Dorsolateral prefrontal cortex (tissue), 120 donors: ENCODE measurements at regions of chr5 and their contacts with region 1.

Region 1: GRCh38 chr5:179060116-179061008 is at the start of gene ZNF354C:
- DNase-seq: peak; percentile 78 to 94 (median 85)
- H3K4me3 ChIP-seq: peak within 1 kb of the TSS; percentile 47 to 97 (median 79)
- H3K27ac ChIP-seq: peak within 1 kb of the TSS in 58 of 59 donors; percentile 7 to 87 (median 74)
- H3K27me3 ChIP-seq: peaks cover 0 to 7% (median 0%) of the 10 kb centered on the region in 45 donors
- CTCF ChIP-seq: peak in 36 of 56 donors; percentile 7 to 60 (median 28)
- total RNA-seq, gene ZNF354C: 4.6 to 10.9 (median 7.7) TPM

Region 2: DNA sequence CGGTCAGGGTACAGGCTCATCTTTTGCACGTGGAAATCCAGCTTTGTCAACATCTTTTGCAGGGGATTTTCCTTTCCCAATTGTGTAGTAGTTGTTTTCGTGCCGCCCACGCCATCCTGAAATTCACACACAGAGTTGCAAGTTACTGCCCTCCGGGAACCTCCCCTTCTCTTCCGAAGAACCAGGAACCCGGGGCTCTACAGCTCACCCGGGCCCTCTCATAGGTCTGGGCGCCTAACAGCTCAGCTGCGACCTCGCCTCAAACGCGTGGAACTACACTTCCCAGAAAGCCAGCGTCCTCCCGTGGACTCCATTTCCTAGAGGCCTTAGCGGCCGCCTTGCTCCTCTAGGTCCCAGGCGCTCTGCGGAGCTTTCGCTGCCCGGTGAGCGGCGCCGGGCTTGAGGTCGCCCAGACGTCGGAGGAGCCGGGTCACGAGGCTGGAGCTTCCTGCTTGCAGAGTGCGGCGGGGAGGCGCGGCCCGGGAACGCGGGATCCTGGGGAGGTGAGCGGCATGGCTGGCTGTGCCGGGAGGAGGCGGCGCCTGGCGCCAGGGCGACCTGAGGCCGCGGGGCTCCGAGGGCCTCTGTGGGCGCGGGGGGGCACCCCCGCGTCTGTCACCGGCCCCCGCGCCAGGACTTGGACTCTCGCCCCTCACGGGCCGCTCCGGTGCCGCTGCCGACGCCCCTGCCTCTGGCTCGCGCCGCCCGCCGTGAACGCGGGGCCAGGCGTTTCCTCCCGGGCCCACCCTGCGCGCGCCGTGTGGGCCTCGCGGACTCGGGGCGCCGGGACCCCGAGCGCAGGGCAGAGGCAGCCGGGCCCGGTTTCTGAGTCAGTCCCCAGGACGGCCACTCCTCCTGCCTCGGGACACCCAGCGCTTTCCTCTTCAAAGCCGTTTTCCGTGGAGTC is 200.5 kb before region 1 on chr5 and contains the start of gene ZNF354B:
- intact Hi-C with region 1: loop called in 1 of 2 experiments (anchors 1 kb)
- DNase-seq: peak; percentile 77 to 95 (median 92)
- H3K4me3 ChIP-seq: peak within 1 kb of the TSS; percentile 56 to 95 (median 83)
- H3K27ac ChIP-seq: peak within 1 kb of the TSS in 57 of 59 donors; percentile 6 to 91 (median 78)
- H3K27me3 ChIP-seq: no peaks in the 10 kb centered on the region
- CTCF ChIP-seq: peak in 47 of 56 donors; percentile 14 to 66 (median 45)
- total RNA-seq, gene ZNF354B: 13.5 to 33.5 (median 21.8) TPM

Region 3: DNA sequence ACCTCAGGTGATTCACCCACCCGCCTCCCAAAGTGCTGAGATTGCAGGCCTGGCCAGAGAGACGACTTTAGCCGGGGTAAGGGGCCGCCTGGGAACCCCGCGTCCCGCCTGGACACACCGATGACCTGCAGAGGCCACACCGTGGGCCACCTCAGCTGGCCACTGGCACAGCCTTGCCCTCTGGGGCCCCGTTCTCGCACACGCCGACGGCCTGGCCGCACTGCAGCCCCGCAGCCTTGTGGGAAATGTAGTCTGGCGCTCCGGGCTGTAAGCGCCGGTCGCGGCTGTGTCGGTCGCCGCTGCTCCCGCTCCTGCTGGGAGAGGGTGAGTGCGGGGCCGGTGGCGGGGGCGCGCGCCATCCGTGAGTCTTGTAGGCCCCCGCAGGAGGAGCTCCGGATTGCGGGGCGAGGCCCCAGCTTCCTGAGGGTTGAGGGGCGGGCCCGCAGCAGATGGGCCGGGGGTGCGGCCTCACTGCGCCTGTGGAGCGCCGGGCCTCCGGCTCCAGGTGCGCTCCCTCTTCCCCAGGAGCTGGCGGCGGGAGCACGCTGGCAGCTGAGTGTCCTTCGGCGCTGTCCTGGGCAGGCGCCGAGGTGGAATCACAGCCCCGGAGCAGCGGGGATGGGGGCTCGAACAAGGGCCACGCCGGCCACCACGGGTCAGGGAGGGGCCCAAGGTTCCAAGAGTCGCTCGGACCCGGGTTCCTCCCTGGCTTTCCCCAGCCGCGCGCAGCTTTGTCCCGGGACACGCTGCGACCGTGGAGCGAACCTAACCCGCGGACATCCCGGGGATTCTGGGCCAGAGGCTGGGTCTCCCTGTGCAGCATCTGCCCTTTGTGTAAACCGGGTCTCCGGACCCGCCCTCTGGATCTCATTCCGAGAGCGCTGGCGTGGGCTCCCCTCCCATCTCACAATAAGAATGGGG is 164.5 kb before region 1 on chr5 and contains the start of gene ZFP2:
- intact Hi-C with region 1: loop called in 1 of 2 experiments (anchors 5 kb)
- DNase-seq: peak; percentile 47 to 85 (median 72)
- H3K4me3 ChIP-seq: peak within 1 kb of the TSS; percentile 60 to 97 (median 87)
- H3K27ac ChIP-seq: peak within 1 kb of the TSS; percentile 58 to 95 (median 83)
- H3K27me3 ChIP-seq: no peaks in the 10 kb centered on the region
- CTCF ChIP-seq: peak in 16 of 56 donors; percentile 8 to 34 (median 21)
- total RNA-seq, gene ZFP2: 2.9 to 11.1 (median 5.7) TPM